HepG2 (cell line): ENCODE measurements at regions of chr18 and their contacts with region 1.

Region 1: DNA sequence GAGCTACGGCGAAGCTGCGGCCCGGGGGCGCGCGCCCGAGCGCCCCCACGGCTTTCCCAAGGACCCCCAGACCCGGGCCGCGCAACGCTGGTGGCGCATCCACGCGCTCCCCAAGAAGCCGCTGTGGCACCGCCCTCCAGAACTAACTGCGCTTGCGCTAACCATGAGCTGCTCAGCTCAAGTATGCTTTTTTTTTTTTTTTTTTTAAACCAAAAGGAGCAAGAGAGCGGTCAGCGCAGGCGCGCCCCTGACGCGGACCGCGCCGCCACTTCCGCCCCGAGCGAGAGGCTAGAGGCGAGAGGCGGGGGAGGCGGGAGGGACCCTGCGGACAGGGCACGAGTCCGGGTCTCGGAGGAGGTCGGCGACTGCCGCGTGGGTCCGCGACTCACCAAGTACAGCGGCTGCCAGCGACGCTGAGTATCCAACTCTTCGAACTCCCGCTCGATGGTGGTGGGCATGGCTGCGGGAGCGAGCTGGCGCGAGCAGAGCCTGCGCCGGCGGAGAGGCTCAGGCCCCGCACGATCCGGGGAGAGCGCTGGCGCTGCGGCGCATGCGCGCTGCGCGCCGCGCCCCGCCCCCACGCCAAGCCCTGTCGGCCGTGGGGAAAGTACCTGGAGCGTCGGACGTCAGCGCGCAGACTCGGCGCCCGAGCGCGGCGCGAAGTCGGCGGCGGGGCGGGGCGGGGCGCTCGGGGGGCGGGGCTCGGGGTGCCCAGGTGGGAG is at the start of gene PTPN2:
- DNase-seq: peak; percentile 90
- ATAC-seq: peak; percentile 90
- H3K4me3 ChIP-seq: peak within 1 kb of the TSS; percentile 76 to 94 (median 83)
- H3K27ac ChIP-seq: peak within 1 kb of the TSS; percentile 99
- H3K4me1 ChIP-seq: peaks cover 57% of the 10 kb centered on the region
- H3K27me3 ChIP-seq: no peaks in the 10 kb centered on the region; a peak in 1 of 5 replicates
- CTCF ChIP-seq: no peak
- EP300 ChIP-seq: no peak
- POLR2A ChIP-seq: peak; percentile 94 to 99
- RAD21 ChIP-seq: peak; percentile 69
- total RNA-seq, gene PTPN2: 41.5 and 50.4 TPM in 2 replicates

Region 2: DNA sequence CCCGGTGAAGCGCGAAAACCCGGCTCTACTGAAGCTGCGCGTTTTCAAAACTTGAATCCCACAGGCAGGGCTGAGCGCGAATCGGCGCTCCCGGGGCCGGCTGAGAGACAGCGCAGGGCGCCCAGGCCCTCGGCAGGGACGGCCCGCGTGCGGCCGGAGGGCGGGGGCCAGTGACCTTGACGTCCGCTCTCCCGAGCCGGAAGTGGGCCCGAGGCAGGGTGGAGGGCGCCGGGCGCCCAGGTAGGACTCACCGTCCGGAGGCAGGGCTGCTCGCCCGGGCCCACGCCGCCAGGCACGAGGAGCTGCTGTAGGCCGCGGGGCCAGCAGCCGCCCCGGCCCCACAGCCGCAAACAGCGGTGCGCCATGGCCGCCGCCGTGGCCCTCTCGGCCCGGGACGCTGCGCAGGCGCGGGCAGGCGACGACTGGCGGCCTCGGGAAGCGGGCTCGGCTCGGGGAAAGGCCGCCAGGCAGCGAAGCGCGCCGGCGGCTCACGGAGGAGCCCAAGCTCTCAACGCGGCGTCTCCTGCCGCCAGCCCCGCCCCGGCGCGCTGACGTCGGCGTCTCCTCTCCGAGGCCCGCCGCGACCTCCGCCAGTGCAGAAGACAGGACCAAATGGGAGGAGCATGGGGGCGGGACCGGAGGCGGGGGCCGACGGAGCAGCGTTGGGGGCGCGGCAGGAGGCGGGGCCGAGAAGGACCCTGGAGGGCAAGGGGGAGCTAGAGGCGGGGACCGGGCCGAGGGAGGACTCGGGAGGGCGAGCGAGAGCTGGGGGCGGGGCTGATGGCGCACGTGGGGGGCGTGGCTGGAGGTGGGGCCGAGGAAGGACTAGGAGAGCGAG is 506.9 kb before region 1 on chr18 and contains the start of gene AFG3L2:
- CTCF ChIA-PET with region 1: no interaction called
- POLR2A ChIA-PET with region 1: interaction called, 16 read pairs
- in situ Hi-C with region 1: no loop called
- intact Hi-C with region 1: no loop called
- DNase-seq: peak; percentile 96
- ATAC-seq: peak; percentile 81
- H3K4me3 ChIP-seq: peak within 1 kb of the TSS; percentile 68 to 93 (median 78)
- H3K27ac ChIP-seq: peak within 1 kb of the TSS; percentile 98
- H3K4me1 ChIP-seq: peaks cover 38% of the 10 kb centered on the region
- H3K27me3 ChIP-seq: no peaks in the 10 kb centered on the region; a peak in 1 of 5 replicates
- CTCF ChIP-seq: no peak
- EP300 ChIP-seq: no peak; a peak in 1 of 4 replicates
- POLR2A ChIP-seq: peak; percentile 75 to 86; a peak in 3 of 4 replicates
- RAD21 ChIP-seq: peak; percentile 79
- total RNA-seq, gene AFG3L2: 86.3 and 86.9 TPM in 2 replicates

Region 3: GRCh38 chr18:12668041-12668440 is 215.8 kb before region 1 on chr18:
- CTCF ChIA-PET with region 1: no interaction called
- POLR2A ChIA-PET with region 1: no interaction called
- in situ Hi-C with region 1: no loop called
- intact Hi-C with region 1: no loop called
- DNase-seq: no peak
- ATAC-seq: no peak
- H3K4me3 ChIP-seq: no peak overlapping the region
- H3K27ac ChIP-seq: no peak overlapping the region
- H3K4me1 ChIP-seq: no peaks in the 10 kb centered on the region
- H3K27me3 ChIP-seq: no peaks in the 10 kb centered on the region
- CTCF ChIP-seq: no peak
- EP300 ChIP-seq: no peak
- POLR2A ChIP-seq: no peak
- RAD21 ChIP-seq: no peak

Region 4: GRCh38 chr18:12726774-12727550 is 156.9 kb before region 1 on chr18:
- CTCF ChIA-PET with region 1: no interaction called
- POLR2A ChIA-PET with region 1: interaction called, 33 read pairs
- in situ Hi-C with region 1: no loop called
- intact Hi-C with region 1: no loop called
- DNase-seq: peak; percentile 65
- ATAC-seq: peak; percentile 36
- H3K4me3 ChIP-seq: no peak overlapping the region
- H3K27ac ChIP-seq: no peak overlapping the region
- H3K4me1 ChIP-seq: peaks cover 32% of the 10 kb centered on the region
- H3K27me3 ChIP-seq: no peaks in the 10 kb centered on the region; a peak in 1 of 5 replicates
- CTCF ChIP-seq: peak; percentile 88
- EP300 ChIP-seq: no peak
- POLR2A ChIP-seq: no peak
- RAD21 ChIP-seq: peak; percentile 88

Region 5: GRCh38 chr18:12838178-12838634 is 45.6 kb before region 1 on chr18:
- CTCF ChIA-PET with region 1: no interaction called
- POLR2A ChIA-PET with region 1: interaction called, 12 read pairs
- in situ Hi-C with region 1: no loop called
- intact Hi-C with region 1: no loop called
- DNase-seq: peak; percentile 90
- ATAC-seq: peak; percentile 98
- H3K4me3 ChIP-seq: peak overlapping the region in 2 of 3 experiments; percentile 23 to 37; a peak in 4 of 6 replicates
- H3K27ac ChIP-seq: peak overlapping the region; percentile 85
- H3K4me1 ChIP-seq: peaks cover 24% of the 10 kb centered on the region
- H3K27me3 ChIP-seq: no peaks in the 10 kb centered on the region
- CTCF ChIP-seq: no peak
- EP300 ChIP-seq: peak; percentile 22 to 69; a peak in 2 of 4 replicates
- POLR2A ChIP-seq: no peak
- RAD21 ChIP-seq: no peak

Region 6: DNA sequence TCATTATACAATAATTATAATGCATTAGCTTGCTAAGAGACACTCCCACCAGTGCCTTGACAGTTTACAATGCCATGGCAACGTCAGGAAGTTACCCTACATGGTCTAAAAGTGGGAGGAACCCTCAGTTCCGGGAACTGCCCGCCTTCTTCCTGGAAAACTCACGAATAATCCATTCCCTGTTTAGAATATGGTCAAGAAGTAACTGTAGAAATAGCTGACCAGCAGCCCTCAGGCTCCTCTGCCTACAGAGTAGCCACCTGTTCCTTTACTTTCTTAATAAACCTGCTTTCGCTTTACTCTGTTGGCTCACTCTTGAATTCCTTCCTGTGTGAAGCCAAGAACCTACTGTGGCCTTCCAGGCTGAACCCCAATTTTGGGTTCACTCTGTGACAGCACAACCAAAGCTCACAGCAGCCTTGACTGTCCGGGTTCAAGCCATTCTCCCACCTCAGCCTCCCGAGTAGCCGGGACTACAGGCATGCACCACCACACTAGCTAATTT is 20.2 kb after region 1 on chr18:
- CTCF ChIA-PET with region 1: no interaction called
- POLR2A ChIA-PET with region 1: interaction called, 12 read pairs
- in situ Hi-C with region 1: no loop called
- intact Hi-C with region 1: no loop called
- DNase-seq: no peak
- ATAC-seq: no peak
- H3K4me3 ChIP-seq: no peak overlapping the region
- H3K27ac ChIP-seq: no peak overlapping the region
- H3K4me1 ChIP-seq: peaks cover 38% of the 10 kb centered on the region
- H3K27me3 ChIP-seq: peaks cover 1 to 26% of the 10 kb centered on the region in 2 experiments; a peak in 3 of 5 replicates
- CTCF ChIP-seq: no peak
- EP300 ChIP-seq: no peak
- POLR2A ChIP-seq: no peak
- RAD21 ChIP-seq: no peak

Region 7: GRCh38 chr18:12934454-12935071 is 50.7 kb after region 1 on chr18:
- CTCF ChIA-PET with region 1: interaction called, 4 read pairs
- POLR2A ChIA-PET with region 1: interaction called, 10 read pairs
- in situ Hi-C with region 1: no loop called
- intact Hi-C with region 1: loop called (anchors 1 kb)
- DNase-seq: peak; percentile 82
- ATAC-seq: peak; percentile 94
- H3K4me3 ChIP-seq: no peak overlapping the region; a peak in 1 of 6 replicates
- H3K27ac ChIP-seq: no peak overlapping the region
- H3K4me1 ChIP-seq: peaks cover 57% of the 10 kb centered on the region
- H3K27me3 ChIP-seq: no peaks in the 10 kb centered on the region
- CTCF ChIP-seq: peak; percentile 97
- EP300 ChIP-seq: no peak
- POLR2A ChIP-seq: no peak
- RAD21 ChIP-seq: peak; percentile 94